ENCODE measurements at regions of chr12 and their contacts with region 1.

Region 1: GRCh38 chr12:94676031-94676641 is 25.8 kb upstream of the TMCC3 start:
- DNase-seq: peak; percentile 39 to 81
- ATAC-seq: peak; percentile 84 to 96 (median 93)
- H3K4me3 ChIP-seq: no peak overlapping the region
- H3K4me3 Mint-ChIP-seq: peak overlapping the region; percentile 87
- H3K27ac ChIP-seq: peak overlapping the region; percentile 87
- H3K27ac Mint-ChIP-seq: peak overlapping the region; percentile 95
- H3K4me1 ChIP-seq: peaks cover 44% of the 10 kb centered on the region
- H3K4me1 Mint-ChIP-seq: peaks cover 56 to 58% of the 10 kb centered on the region in 2 donors
- H3K27me3 ChIP-seq: no peaks in the 10 kb centered on the region
- H3K27me3 Mint-ChIP-seq: no peaks in the 10 kb centered on the region
- CTCF ChIP-seq: no peak

Region 2: GRCh38 chr12:94262228-94263010 is 413.7 kb before region 1 on chr12:
- intact Hi-C with region 1: loop called (anchors 5 kb)
- DNase-seq: peak; percentile 78 to 87
- ATAC-seq: peak; percentile 87 to 93 (median 88)
- H3K4me3 ChIP-seq: peak overlapping the region; percentile 69
- H3K4me3 Mint-ChIP-seq: peak overlapping the region; percentile 92
- H3K27ac ChIP-seq: peak overlapping the region; percentile 96
- H3K27ac Mint-ChIP-seq: peak overlapping the region; percentile 96 to 97
- H3K4me1 ChIP-seq: peaks cover 37% of the 10 kb centered on the region
- H3K4me1 Mint-ChIP-seq: peaks cover 33 to 44% of the 10 kb centered on the region in 2 donors
- H3K27me3 ChIP-seq: no peaks in the 10 kb centered on the region
- H3K27me3 Mint-ChIP-seq: no peaks in the 10 kb centered on the region
- CTCF ChIP-seq: no peak

Region 3: DNA sequence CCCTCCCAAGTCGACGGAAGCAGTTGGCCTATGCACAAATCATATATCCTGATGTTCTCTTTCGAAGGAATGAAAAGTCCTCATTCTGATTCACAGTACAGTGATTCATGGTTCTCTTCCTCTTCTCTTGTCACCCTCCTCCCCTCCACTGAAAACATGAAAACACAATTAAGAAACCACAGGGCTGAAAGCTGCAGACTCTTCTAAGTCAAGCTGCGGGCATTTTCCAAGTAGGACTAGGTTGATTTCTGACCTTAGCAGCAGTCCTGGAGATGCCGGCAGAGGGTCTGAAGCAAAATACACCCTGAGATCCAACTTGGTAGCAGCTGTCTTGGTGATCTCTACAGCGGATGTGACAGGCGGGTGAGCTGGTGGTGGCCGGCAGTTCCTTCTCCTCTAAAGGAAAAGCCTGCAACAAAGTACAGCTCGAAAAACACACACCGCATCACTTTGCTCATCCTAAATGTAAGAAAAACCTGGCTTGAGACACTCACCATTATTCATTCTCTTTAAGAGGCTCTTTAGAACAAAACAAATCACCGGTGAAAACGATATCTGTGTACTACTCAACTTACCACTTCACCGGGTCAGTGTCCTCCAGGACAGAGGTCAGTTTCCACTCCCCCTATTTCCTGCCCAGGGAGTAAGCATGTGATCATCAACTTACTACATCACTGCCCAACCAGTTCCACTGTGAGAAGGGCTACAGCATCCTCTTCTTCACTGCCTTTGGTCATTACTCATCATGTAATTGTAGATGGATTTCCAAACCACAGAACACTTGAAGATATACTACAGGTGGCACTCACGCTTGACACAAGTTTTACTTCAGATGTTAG is 31.8 kb before region 1 on chr12:
- intact Hi-C with region 1: loop called (anchors 1 kb)
- DNase-seq: peak; percentile 26 to 31
- ATAC-seq: peak; percentile 64 to 77 (median 71)
- H3K4me3 ChIP-seq: peak overlapping the region; percentile 13
- H3K4me3 Mint-ChIP-seq: peak overlapping the region; percentile 80
- H3K27ac ChIP-seq: peak overlapping the region; percentile 40
- H3K27ac Mint-ChIP-seq: peak overlapping the region; percentile 84 to 85
- H3K4me1 ChIP-seq: peaks cover 33% of the 10 kb centered on the region
- H3K4me1 Mint-ChIP-seq: peaks cover 58 to 68% of the 10 kb centered on the region in 2 donors
- H3K27me3 ChIP-seq: no peaks in the 10 kb centered on the region
- H3K27me3 Mint-ChIP-seq: peaks cover 0 to 2% of the 10 kb centered on the region in 2 donors
- CTCF ChIP-seq: no peak

Region 4: DNA sequence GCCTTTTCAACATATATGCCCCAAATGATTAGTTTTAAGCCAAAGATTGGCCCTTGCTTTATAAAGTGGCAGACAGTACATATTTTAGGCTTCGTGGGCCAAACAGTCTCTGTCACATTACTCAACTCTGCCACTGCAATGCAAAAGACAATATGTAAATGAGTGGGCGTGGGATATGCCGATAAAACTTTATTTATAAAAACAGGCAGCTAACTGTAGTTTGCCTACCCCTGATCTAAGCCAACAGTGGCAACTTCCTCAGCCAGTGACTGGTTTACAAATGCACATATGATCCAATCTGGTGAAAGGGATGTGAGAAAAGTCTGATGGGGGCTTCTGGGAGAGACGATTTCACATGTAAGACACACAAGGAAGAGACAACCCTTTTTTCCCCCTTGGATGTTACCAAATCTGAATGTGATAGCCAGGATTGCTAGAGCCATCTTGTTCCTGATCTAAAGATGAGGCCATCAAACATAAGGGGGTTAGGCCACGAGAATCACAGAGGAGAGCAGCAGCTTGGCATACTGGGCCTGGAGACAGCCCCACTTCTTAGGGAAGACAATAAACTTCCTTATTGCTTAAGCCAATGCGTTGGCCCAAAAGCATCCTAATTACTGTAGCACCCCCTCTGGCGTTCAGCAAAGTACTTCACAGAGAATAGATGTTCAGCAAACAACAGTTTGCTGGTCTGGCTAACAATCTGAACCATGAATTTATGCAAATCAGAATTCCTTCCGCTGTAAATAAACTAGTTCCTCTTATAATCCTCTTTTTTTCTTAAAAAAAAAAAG is 49.4 kb after region 1 on chr12:
- intact Hi-C with region 1: loop called (anchors 1 kb)
- DNase-seq: peak in 1 of 2 donors; percentile 50
- ATAC-seq: peak; percentile 43 to 71 (median 58)
- H3K4me3 ChIP-seq: no peak overlapping the region
- H3K4me3 Mint-ChIP-seq: no peak overlapping the region
- H3K27ac ChIP-seq: no peak overlapping the region
- H3K27ac Mint-ChIP-seq: no peak overlapping the region
- H3K4me1 ChIP-seq: no peaks in the 10 kb centered on the region
- H3K4me1 Mint-ChIP-seq: peaks cover 0 to 13% of the 10 kb centered on the region in 2 donors
- H3K27me3 ChIP-seq: no peaks in the 10 kb centered on the region
- H3K27me3 Mint-ChIP-seq: peaks cover 0 to 9% of the 10 kb centered on the region in 2 donors
- CTCF ChIP-seq: peak; percentile 34

Region 5: GRCh38 chr12:95003213-95003920 is 327.2 kb after region 1 on chr12 and contains the start of gene NDUFA12:
- intact Hi-C with region 1: loop called (anchors 2 kb)
- DNase-seq: peak; percentile 89 to 98
- ATAC-seq: peak; percentile 99
- H3K4me3 ChIP-seq: peak within 1 kb of the TSS; percentile 76
- H3K4me3 Mint-ChIP-seq: peak within 1 kb of the TSS; percentile 95
- H3K27ac ChIP-seq: peak within 1 kb of the TSS; percentile 77
- H3K27ac Mint-ChIP-seq: peak within 1 kb of the TSS; percentile 94 to 96
- H3K4me1 ChIP-seq: peaks cover 21% of the 10 kb centered on the region
- H3K4me1 Mint-ChIP-seq: peaks cover 43% of the 10 kb centered on the region in 2 donors
- H3K27me3 ChIP-seq: no peaks in the 10 kb centered on the region
- H3K27me3 Mint-ChIP-seq: no peaks in the 10 kb centered on the region
- CTCF ChIP-seq: no peak
- total RNA-seq, gene NDUFA12: 67.7 to 91.5 (median 69.6) TPM

Measured in natural killer cell (primary cell).